Panc1 (cell line): ENCODE measurements at regions of chr11 and their contacts with region 1.

Region 1: GRCh38 chr11:32034149-32034548 is 56.7 kb upstream of the RCN1 start:
- DNase-seq: no peak
- ATAC-seq: no peak
- H3K4me3 ChIP-seq: no peak overlapping the region
- H3K27ac ChIP-seq: no peak overlapping the region
- H3K4me1 ChIP-seq: no peaks in the 10 kb centered on the region
- H3K27me3 ChIP-seq: peaks cover 26% of the 10 kb centered on the region
- CTCF ChIP-seq: no peak

Region 2: GRCh38 chr11:32006799-32007388 is 27.3 kb before region 1 on chr11:
- CTCF ChIA-PET with region 1: interaction called, 12 read pairs
- POLR2A ChIA-PET with region 1: no interaction called
- in situ Hi-C with region 1: no loop called
- intact Hi-C with region 1: no loop called
- DNase-seq: peak; percentile 33
- ATAC-seq: peak; percentile 69; the same call in 1 of the 2 replicates
- H3K4me3 ChIP-seq: no peak overlapping the region
- H3K27ac ChIP-seq: no peak overlapping the region
- H3K4me1 ChIP-seq: no peaks in the 10 kb centered on the region
- H3K27me3 ChIP-seq: peaks cover 18% of the 10 kb centered on the region
- CTCF ChIP-seq: peak; percentile 82

Region 3: GRCh38 chr11:32221476-32222010 is 187.4 kb after region 1 on chr11:
- CTCF ChIA-PET with region 1: no interaction called
- POLR2A ChIA-PET with region 1: interaction called, 14 read pairs
- in situ Hi-C with region 1: no loop called
- intact Hi-C with region 1: no loop called
- DNase-seq: no peak
- ATAC-seq: no peak
- H3K4me3 ChIP-seq: no peak overlapping the region
- H3K27ac ChIP-seq: no peak overlapping the region
- H3K4me1 ChIP-seq: no peaks in the 10 kb centered on the region
- H3K27me3 ChIP-seq: peaks cover 2% of the 10 kb centered on the region; the same call in 1 of the 2 replicates
- CTCF ChIP-seq: no peak